ENCODE measurements at regions of chr3 and their contacts with region 1.

Region 1: DNA sequence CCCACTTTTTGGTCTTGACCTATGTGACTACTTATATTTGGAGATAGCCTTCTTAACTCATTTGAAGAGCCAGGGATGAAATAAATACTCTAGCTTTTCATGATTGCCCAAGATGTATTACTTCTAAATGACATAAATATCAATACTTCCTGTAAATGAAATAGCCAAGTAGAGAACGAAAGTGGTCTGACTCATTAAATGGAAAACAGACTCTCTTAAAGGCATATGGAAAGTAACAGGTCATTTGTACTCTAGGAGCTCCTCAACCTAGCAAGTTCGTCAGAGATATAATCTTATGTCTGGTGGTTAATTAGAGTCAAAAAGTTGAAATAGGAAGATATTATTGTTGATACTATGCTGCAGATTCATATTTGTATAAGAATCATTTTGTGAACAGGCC is 1105.4 kb downstream of the TUSC7 start:
- DNase-seq: no peak
- ATAC-seq: no peak

Region 2: DNA sequence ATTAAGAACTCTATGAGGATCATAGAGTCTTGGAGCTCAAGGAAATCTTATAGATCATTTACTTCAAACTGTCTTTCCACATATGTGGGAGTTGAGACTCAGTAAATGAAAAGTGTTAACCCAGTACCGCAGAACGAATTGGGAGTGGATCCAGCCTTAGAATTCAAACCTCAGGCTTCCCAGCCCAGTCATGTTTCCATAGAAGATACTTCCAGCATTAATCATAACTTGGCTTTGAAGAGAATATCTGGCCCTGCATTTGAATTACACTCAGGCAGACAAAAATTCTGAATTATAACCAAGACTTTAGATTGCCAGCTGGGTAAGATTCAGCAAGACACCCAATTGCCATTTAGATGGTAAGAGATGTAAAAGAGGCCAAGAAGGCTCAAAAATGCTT is 133.4 kb before region 1 on chr3:
- intact Hi-C with region 1: loop called (anchors 10 kb)
- DNase-seq: no peak
- ATAC-seq: peak; percentile 54